HepG2 (cell line): ENCODE measurements at regions of chr9 and their contacts with region 1.

Region 1: GRCh38 chr9:115013998-115014397 is 83.6 kb upstream of the TNFSF8 start:
- DNase-seq: peak; percentile 31
- ATAC-seq: peak; percentile 84
- H3K4me3 ChIP-seq: no peak overlapping the region
- H3K27ac ChIP-seq: no peak overlapping the region
- H3K4me1 ChIP-seq: no peaks in the 10 kb centered on the region
- H3K27me3 ChIP-seq: peaks cover 0 to 5% of the 10 kb centered on the region in 2 experiments; a peak in 1 of 5 replicates
- CTCF ChIP-seq: peak; percentile 84
- EP300 ChIP-seq: no peak
- POLR2A ChIP-seq: no peak
- RAD21 ChIP-seq: peak; percentile 71

Region 2: DNA sequence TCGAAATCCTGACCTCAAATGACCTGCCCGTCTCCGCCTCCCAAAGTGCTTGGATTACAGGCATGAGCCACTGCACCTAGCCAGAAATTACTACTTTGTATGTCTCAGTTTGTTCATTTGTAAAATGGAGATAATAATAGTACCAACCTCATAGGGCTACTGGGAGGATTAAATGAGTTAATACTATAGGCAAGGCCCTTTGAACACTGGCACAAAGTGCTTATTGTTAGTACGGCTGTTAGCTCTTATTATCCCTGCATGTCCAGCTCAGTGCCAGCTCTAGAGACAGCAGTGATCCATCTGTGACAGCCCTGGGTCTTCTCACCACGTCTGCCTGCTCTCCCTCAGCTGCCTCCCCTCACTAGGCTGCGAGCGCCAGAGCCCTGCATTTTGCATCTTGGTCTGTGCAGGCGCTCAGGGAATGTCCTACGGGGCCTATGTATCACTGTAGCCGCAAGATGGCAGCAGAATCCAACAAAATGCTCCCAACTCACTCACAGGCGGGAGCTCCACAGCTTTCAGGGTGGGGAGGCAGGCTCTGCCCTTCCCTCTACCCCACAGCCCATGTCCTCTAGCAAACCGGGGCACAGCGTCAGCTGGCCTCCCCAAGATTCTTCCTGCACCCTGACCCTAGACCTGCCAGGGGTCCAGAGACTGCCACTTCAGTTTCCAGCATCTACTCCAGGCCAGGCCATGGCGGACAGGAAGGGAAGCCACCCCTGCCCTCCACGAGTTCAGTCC is 608.5 kb before region 1 on chr9:
- CTCF ChIA-PET with region 1: no interaction called
- POLR2A ChIA-PET with region 1: no interaction called
- in situ Hi-C with region 1: no loop called
- intact Hi-C with region 1: loop called (anchors 10 kb)
- DNase-seq: peak; percentile 72
- ATAC-seq: peak; percentile 88
- H3K4me3 ChIP-seq: no peak overlapping the region
- H3K27ac ChIP-seq: no peak overlapping the region
- H3K4me1 ChIP-seq: peaks cover 29% of the 10 kb centered on the region
- H3K27me3 ChIP-seq: no peaks in the 10 kb centered on the region
- CTCF ChIP-seq: peak; percentile 95
- EP300 ChIP-seq: no peak
- POLR2A ChIP-seq: no peak
- RAD21 ChIP-seq: peak; percentile 94

Region 3: DNA sequence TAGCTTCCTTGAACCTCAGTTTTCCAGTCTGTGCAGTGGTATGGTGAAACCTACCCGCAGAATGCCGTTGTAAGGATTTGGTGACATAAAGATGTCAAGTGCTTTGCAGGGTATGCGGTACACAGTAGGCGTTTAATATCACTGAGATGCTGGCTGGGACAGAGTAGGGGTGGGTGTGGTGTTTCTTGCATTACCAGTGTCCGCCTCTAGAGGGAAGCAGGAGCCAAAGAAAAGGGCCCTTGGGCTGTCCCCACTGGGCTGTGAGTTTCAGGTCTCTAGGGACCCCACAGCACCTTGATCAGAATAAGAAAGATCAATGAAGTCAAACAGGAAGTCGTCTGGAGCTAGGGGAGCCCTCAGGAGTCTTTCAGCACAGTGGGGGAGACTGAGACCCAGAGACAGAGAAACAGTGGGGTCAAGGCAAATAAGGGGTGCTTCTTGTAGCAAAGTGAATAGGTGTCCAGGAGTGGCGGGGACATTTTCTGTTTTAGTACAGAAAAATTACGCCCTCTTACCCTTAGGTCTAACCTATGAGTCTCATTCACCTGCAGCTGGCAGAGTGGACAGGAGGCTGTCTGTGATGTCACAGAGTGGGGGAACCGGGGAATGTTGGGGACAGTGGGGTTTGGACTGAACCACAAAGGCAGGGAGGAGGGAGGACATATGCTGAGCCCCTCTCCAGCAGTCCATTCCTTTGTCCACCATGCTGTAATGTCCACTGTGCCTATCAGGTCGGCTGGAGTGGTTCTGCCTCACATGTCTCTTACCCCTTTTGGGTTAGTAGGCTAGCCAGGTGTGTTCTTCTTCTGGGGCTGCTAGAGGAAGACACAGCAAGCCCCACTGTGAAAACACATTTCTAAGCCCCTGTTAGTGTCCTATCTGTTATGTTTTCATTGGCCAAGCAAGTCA is 351.7 kb before region 1 on chr9:
- CTCF ChIA-PET with region 1: interaction called, 26 read pairs
- POLR2A ChIA-PET with region 1: no interaction called
- in situ Hi-C with region 1: no loop called
- intact Hi-C with region 1: loop called (anchors 1 kb)
- DNase-seq: peak; percentile 22
- ATAC-seq: peak; percentile 96
- H3K4me3 ChIP-seq: no peak overlapping the region
- H3K27ac ChIP-seq: no peak overlapping the region
- H3K4me1 ChIP-seq: no peaks in the 10 kb centered on the region
- H3K27me3 ChIP-seq: peaks cover 0 to 27% of the 10 kb centered on the region in 2 experiments; a peak in 3 of 5 replicates
- CTCF ChIP-seq: peak; percentile 77
- EP300 ChIP-seq: no peak
- POLR2A ChIP-seq: no peak
- RAD21 ChIP-seq: peak; percentile 56

Region 4: GRCh38 chr9:114738581-114739316 is 275.2 kb before region 1 on chr9:
- CTCF ChIA-PET with region 1: interaction called, 34 read pairs
- POLR2A ChIA-PET with region 1: no interaction called
- in situ Hi-C with region 1: loop called (anchors 10 kb)
- intact Hi-C with region 1: loop called (anchors 1 kb)
- DNase-seq: peak; percentile 46
- ATAC-seq: peak; percentile 93
- H3K4me3 ChIP-seq: no peak overlapping the region
- H3K27ac ChIP-seq: no peak overlapping the region
- H3K4me1 ChIP-seq: peaks cover 5% of the 10 kb centered on the region; the same call in 1 of the 2 replicates
- H3K27me3 ChIP-seq: no peaks in the 10 kb centered on the region
- CTCF ChIP-seq: peak; percentile 90
- EP300 ChIP-seq: no peak
- POLR2A ChIP-seq: no peak
- RAD21 ChIP-seq: peak; percentile 85

Region 5: DNA sequence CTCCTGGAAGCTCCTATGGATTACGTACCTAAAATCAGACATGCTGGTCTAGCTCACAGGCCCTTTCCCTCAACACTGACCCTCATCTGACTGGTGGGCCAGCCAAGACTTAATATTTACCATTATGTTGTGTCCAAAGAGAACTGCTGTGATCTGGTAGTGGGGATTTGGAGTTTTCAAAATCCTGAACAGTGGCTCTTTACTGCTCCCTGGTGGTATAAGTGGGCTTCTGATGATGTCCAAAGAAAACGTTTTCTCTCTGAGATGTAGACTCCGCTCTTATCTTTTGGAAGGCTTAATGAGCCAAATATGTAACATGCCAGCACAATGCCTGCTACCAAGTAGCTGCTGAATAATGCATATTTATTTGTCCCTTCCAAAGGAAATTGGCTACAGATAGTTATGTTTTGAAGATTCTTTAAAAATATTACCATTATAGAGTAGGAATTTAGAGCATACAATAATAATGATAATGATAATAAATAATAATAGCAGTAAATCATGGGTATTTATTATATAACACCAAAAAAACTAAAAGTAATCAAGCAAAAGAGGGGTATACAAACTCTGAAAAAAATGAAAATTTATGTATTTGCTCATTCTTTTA is 510.6 kb after region 1 on chr9:
- CTCF ChIA-PET with region 1: no interaction called
- POLR2A ChIA-PET with region 1: no interaction called
- in situ Hi-C with region 1: no loop called
- intact Hi-C with region 1: loop called (anchors 5 kb)
- DNase-seq: peak; percentile 32
- ATAC-seq: peak; percentile 55; the same call in 2 of the 3 replicates
- H3K4me3 ChIP-seq: no peak overlapping the region
- H3K27ac ChIP-seq: no peak overlapping the region
- H3K4me1 ChIP-seq: no peaks in the 10 kb centered on the region
- H3K27me3 ChIP-seq: no peaks in the 10 kb centered on the region; a peak in 1 of 5 replicates
- CTCF ChIP-seq: peak; percentile 71
- EP300 ChIP-seq: no peak
- POLR2A ChIP-seq: no peak
- RAD21 ChIP-seq: peak; percentile 60